Common myeloid progenitor, CD34-positive (primary cell): ENCODE measurements at regions of chr2 and their contacts with region 1.

Region 1: DNA sequence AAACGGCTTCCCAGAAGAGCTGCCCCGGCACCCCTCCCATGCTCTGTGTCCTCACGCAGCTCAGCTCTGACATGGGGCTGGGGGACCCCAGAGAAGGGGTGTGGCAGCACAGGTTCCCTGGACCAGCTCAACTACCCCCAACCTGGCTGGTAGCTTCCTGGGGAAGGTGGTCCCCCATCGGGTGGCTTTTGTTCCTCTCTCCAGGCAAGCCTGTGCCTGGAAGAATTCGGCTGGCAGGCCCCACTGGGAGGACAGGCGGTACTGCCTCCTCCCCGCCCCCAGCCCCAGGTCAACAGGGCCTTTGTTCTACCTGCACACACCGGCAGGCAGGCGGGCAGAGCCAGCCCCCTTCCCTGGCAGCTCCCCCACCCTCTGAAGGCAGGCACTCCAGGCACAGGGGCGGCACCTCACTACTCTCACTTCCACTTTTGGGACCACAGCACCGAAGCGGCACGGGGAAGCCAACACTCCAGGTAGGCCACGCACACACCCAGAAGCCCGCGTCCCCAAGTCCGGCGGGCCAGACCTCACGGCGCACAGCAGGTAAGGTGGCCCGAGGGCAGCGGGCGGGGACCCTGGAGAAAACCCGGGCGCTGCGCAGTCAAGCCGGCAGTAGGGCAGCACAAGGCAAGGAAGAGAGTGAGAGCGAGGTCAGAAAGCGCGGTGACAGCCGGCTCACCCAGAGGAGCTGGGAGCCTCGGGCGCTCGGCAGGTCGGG is 1.3 kb downstream of the HS6ST1 start:
- DNase-seq: peak; percentile 31 to 76 (median 64)
- H3K4me3 ChIP-seq: peak overlapping the region; percentile 62 to 94 (median 80)
- H3K27ac ChIP-seq: no peak overlapping the region
- H3K4me1 ChIP-seq: peaks cover 0 to 78% (median 60%) of the 10 kb centered on the region in 4 experiments
- H3K27me3 ChIP-seq: no peaks in the 10 kb centered on the region

Region 2: GRCh38 chr2:128282976-128283810 is 34.1 kb before region 1 on chr2:
- CTCF ChIA-PET with region 1: interaction called, 15 read pairs
- POLR2A ChIA-PET with region 1: interaction called, 4 read pairs
- DNase-seq: peak; percentile 14 to 48 (median 46)
- H3K4me3 ChIP-seq: no peak overlapping the region
- H3K27ac ChIP-seq: no peak overlapping the region
- H3K4me1 ChIP-seq: peaks cover 4 to 71% (median 64%) of the 10 kb centered on the region in 4 experiments
- H3K27me3 ChIP-seq: no peaks in the 10 kb centered on the region

Region 3: DNA sequence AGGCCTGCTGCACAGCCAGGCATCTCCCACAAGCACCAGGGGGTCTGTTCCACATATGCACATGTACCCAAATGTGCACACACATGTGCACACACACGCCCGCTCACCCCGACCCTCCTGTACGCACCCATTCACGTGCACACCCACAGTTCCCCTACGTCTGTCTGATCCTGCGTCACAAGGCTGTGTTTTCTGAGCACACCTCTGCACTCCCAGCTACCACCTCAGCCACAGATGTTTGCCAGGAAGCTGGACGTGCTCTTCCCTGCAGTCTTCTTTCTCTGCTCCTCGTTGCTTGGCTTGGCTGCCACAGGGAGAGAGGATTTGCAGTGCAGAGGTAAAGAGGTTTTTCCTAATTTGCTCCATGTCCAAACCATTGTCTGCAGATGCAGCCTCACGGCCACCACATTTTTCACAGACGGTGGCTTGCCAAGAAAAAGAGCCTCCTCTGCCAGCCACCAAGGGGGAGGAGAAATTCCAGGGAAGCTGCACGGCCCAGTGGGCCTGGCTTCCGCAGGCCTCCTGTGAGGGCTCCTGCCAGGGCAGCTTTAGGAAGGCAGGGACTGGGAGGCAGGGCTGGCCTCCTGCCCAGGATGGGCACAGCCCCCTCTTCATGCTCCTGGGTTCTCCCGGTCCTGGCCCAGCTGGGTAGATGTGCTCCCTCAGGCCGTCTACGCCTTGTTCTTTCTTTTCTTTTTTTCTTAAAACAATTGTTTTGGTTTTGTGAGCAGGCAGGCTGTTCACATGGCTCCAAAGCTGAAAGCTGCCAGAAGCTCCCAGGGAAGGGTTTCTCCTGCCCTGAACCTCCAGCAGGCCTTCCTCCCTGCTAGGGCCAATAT is 30.6 kb after region 1 on chr2:
- CTCF ChIA-PET with region 1: no interaction called
- POLR2A ChIA-PET with region 1: no interaction called
- DNase-seq: no peak
- H3K4me3 ChIP-seq: no peak overlapping the region
- H3K27ac ChIP-seq: no peak overlapping the region
- H3K4me1 ChIP-seq: peaks cover 0 to 4% (median 1%) of the 10 kb centered on the region in 4 experiments
- H3K27me3 ChIP-seq: no peaks in the 10 kb centered on the region

Region 4: GRCh38 chr2:128408349-128409305 is 91.3 kb after region 1 on chr2:
- CTCF ChIA-PET with region 1: no interaction called
- POLR2A ChIA-PET with region 1: no interaction called
- DNase-seq: no peak
- H3K4me3 ChIP-seq: peak overlapping the region in 1 of 7 experiments; percentile 20
- H3K27ac ChIP-seq: no peak overlapping the region
- H3K4me1 ChIP-seq: peaks cover 5 to 46% (median 24%) of the 10 kb centered on the region in 4 experiments
- H3K27me3 ChIP-seq: no peaks in the 10 kb centered on the region